PC-9 (cell line): ENCODE measurements at regions of chr16 and their contacts with region 1.

Region 1: DNA sequence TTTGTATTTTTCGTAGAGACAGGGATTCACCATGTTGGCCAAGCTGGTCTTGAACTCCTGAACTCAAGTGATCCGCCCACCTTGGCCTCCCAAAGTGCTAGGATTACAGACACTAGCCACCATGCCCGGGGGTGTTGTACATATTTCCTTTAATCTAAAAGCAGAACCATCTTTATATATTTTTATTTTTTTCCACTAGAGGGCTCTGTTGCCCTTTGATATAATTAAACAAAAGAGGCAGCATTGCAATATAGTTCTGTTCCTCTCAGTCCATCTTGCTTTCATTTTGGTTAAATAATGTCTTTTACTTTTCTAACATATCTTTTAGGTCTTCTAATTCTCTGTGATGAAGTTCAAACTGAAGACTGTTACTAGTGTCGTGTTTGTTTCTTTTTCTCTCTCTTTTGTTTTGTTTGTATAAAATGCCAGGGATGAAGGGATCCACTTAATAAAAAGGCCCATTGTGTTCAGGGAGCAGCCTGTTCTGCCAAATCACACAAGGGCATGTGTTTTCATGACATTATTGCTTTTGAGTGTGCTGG is 23.4 kb downstream of the WWOX start:
- DNase-seq: no peak
- H3K4me3 ChIP-seq: no peak overlapping the region
- H3K27ac ChIP-seq: no peak overlapping the region
- H3K4me1 ChIP-seq: no peaks in the 10 kb centered on the region
- H3K27me3 ChIP-seq: no peaks in the 10 kb centered on the region
- CTCF ChIP-seq: peak; percentile 68

Region 2: DNA sequence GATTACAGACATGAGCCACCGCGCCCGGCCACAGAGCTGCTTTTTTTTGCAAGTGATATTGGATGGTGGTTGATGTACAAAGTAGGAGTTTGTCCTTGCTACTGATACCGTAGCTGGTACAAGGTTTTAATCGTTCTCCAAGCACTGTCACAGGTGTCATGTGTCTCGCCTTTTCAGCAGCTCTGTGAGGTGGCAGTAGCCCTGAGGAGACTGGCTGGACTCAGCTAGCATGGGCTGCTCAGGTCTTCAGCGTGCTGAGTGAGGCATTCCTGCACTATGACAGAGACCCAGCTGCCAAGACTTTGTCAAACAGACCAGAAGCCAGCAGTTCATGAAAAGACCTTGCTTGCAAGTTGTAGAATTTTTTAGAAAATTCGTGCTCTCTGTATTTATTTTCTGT is 16.2 kb before region 1 on chr16:
- CTCF ChIA-PET with region 1: no interaction called
- POLR2A ChIA-PET with region 1: no interaction called
- intact Hi-C with region 1: no loop called
- DNase-seq: no peak
- H3K4me3 ChIP-seq: no peak overlapping the region
- H3K27ac ChIP-seq: no peak overlapping the region
- H3K4me1 ChIP-seq: no peaks in the 10 kb centered on the region
- H3K27me3 ChIP-seq: no peaks in the 10 kb centered on the region
- CTCF ChIP-seq: no peak

Region 3: DNA sequence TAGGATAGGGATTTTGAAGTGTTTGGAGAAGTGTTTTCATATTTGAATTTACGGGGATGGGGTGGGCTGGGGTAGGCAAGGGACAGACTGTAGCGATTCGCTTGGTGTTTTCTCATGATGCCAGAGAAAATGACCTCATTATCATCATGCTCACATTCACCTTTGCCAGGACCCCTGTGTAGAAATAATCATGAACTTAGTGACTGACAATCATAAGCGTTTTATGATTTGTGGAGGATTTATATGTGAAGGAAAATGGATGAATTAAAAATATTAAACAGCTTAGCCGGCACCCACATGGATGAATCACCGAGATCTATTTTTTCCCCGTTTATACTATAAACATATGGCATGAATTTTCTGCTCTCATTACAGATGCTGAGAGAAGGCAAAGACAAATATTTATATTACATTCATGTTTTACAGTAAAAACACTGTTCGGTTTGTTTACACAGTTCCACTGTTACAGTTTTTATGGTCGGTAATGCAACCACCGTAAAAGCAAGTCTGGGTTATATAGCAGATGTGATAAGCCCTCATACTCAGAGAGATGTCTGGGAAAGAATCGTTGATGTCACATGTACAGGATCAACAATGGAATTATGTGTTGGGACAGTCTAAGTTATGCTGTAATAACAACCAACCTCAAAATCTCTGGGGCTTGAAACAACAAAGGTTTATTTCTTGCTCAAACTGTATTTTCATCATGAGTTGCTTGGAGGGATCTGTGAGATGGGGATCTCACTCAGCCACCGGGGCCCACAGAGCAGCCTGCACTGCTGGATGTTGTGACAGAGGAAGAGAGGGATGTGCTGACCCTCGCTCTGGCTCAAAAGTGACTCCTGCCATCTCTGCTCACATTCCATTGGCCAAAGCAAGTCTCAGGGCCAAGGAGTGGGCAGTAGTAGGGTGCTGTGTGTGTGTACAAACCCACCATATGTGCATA is 61.7 kb after region 1 on chr16:
- CTCF ChIA-PET with region 1: no interaction called
- POLR2A ChIA-PET with region 1: no interaction called
- intact Hi-C with region 1: no loop called
- DNase-seq: no peak
- H3K4me3 ChIP-seq: no peak overlapping the region
- H3K27ac ChIP-seq: no peak overlapping the region
- H3K4me1 ChIP-seq: no peaks in the 10 kb centered on the region
- H3K27me3 ChIP-seq: no peaks in the 10 kb centered on the region
- CTCF ChIP-seq: no peak

Region 4: DNA sequence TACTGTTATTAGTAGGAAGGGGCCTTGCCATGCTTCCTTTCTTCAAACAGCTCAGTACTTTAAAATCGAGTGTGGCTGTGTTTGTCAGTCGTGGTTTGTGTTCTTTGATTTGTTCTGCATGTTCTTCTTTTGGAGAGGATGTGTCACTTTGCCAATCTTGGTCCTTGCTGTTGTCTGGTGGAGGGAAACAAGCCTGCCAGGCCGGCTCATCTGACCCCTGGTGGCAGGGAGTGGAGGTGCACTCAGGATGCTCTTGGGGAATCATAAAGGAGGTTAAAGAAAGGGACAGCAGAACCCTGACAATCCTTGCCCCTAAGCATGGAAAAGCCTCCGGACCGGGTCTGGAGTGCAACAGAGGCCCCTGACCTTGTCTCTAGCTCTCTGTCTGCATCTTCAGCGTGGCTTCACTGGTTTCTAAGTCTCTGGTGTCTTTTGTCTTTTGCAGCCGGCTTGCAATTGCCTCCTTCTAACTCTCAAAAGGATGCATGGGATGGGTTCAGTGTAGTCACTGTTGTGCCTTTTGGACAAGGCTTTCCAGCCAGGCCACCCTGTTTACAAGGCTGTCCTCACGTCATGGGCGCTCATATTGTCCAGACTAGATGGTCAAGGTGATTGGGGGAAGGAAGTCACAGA is 112.4 kb after region 1 on chr16:
- CTCF ChIA-PET with region 1: no interaction called
- POLR2A ChIA-PET with region 1: no interaction called
- intact Hi-C with region 1: loop called (anchors 1 kb)
- DNase-seq: peak; percentile 57 to 63
- H3K4me3 ChIP-seq: no peak overlapping the region
- H3K27ac ChIP-seq: no peak overlapping the region
- H3K4me1 ChIP-seq: peaks cover 11% of the 10 kb centered on the region
- H3K27me3 ChIP-seq: no peaks in the 10 kb centered on the region
- CTCF ChIP-seq: peak; percentile 96

Region 5: DNA sequence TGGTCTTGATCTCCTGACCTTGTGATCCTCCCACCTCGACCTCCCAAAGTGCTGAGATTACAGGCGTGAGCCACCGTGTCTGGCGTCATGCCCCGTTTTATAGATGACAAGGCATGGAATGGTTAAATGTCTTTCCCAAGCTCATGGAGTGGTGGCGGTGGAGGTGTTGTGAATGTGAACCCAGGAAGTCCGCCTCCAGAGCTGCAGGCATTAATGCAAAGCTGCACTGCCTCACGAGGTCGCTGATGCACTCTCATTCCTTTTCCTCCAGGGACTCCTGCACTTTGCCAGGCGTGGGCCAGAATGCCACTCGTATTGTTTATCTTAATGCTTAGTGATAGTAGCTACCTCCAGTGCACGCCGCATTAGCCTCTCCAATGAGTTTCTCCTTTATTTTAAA is 126.2 kb after region 1 on chr16:
- CTCF ChIA-PET with region 1: no interaction called
- POLR2A ChIA-PET with region 1: no interaction called
- intact Hi-C with region 1: no loop called
- DNase-seq: no peak
- H3K4me3 ChIP-seq: no peak overlapping the region
- H3K27ac ChIP-seq: no peak overlapping the region
- H3K4me1 ChIP-seq: no peaks in the 10 kb centered on the region
- H3K27me3 ChIP-seq: no peaks in the 10 kb centered on the region
- CTCF ChIP-seq: no peak